ENCODE measurements at regions of chr2 and their contacts with region 1.

Region 1: GRCh38 chr2:217798743-217799562 is 203.8 kb downstream of the TNS1 start:
- DNase-seq: peak in 1 of 5 donors; percentile 18
- H3K4me3 ChIP-seq: no peak overlapping the region
- H3K27ac ChIP-seq: no peak overlapping the region
- H3K4me1 ChIP-seq: peaks cover 0 to 14% (median 0%) of the 10 kb centered on the region in 3 donors
- H3K27me3 ChIP-seq: no peaks in the 10 kb centered on the region
- CTCF ChIP-seq: no peak

Region 2: GRCh38 chr2:217471319-217471718 is 327.6 kb before region 1 on chr2:
- intact Hi-C with region 1: no loop called
- DNase-seq: no peak
- H3K4me3 ChIP-seq: no peak overlapping the region
- H3K27ac ChIP-seq: no peak overlapping the region
- H3K4me1 ChIP-seq: no peaks in the 10 kb centered on the region
- H3K27me3 ChIP-seq: no peaks in the 10 kb centered on the region
- CTCF ChIP-seq: no peak

Region 3: GRCh38 chr2:217886720-217887309 is 87.9 kb after region 1 on chr2:
- intact Hi-C with region 1: loop called (anchors 10 kb)
- DNase-seq: peak; percentile 75 to 90 (median 84)
- H3K4me3 ChIP-seq: no peak overlapping the region
- H3K27ac ChIP-seq: peak overlapping the region in 1 of 2 donors; percentile 14
- H3K4me1 ChIP-seq: peaks cover 0 to 22% (median 11%) of the 10 kb centered on the region in 3 donors
- H3K27me3 ChIP-seq: no peaks in the 10 kb centered on the region
- CTCF ChIP-seq: peak; percentile 78

Measured in kidney (tissue), 22 donors.